Left ventricle myocardium inferior (tissue), 1 donor: ENCODE measurements at regions of chr2 and their contacts with region 1.

Region 1: GRCh38 chr2:69306822-69307578 is 80.0 kb downstream of the GFPT1 start:
- DNase-seq: peak; percentile 84
- H3K4me3 ChIP-seq: peak overlapping the region; percentile 70
- H3K27ac ChIP-seq: peak overlapping the region; percentile 86
- H3K4me1 ChIP-seq: peaks cover 48% of the 10 kb centered on the region
- H3K27me3 ChIP-seq: peaks cover 22% of the 10 kb centered on the region
- CTCF ChIP-seq: peak; percentile 87

Region 2: DNA sequence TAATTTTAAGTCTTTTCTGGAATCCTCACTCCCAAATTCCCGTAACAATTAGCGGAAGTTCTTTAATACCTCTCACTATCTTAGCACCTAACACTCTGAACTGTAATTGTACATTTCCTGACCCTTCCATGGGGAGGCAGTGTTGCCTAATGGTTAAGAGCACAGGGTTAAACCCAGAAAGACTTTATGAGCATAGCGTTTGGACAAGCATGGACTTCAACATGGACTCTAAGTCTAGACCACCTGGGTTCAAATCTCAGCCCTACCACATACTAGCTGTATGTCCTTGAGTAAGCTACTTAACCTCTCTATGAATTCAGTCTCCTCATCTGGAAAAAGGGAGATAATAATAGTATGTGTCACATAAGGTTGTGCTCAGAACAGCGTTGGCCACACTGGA is 281.0 kb before region 1 on chr2:
- intact Hi-C with region 1: loop called (anchors 5 kb)
- DNase-seq: no peak
- H3K4me3 ChIP-seq: no peak overlapping the region
- H3K27ac ChIP-seq: no peak overlapping the region
- H3K4me1 ChIP-seq: peaks cover 5% of the 10 kb centered on the region
- H3K27me3 ChIP-seq: no peaks in the 10 kb centered on the region
- CTCF ChIP-seq: peak; percentile 70

Region 3: DNA sequence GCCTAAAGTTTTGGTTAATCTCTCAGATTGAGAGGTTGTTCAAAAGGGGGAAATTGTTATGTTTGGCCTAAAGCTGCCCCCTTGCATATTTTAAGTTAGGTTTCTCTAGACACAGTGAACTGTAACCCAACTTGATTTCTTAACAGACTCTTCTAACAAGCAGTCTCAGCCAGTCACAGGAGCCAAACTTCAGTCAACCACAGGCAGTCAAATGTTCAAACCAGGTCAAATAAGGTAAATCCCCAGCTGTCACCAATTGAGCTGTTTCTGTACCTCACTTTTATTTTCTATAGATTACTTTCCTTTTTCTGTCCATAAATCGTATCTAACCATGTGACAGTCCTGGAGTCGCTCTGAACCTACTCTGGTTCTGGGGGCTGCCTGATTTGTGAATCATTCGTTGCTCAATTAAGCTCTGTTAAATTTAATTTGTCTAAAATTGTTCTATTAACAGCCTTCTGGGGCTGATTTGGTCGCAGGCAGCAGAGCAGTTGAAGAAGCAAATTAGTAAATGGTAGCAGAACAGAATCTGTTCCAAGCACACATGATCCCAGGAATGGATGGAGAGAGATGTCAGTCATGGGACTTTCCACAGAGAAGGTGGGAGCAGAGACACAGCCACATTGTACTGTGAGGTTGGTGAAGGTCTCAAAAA is 146.6 kb after region 1 on chr2:
- intact Hi-C with region 1: no loop called
- DNase-seq: no peak
- H3K4me3 ChIP-seq: no peak overlapping the region
- H3K27ac ChIP-seq: no peak overlapping the region
- H3K4me1 ChIP-seq: no peaks in the 10 kb centered on the region
- H3K27me3 ChIP-seq: no peaks in the 10 kb centered on the region
- CTCF ChIP-seq: no peak